ENCODE measurements at regions of chr2 and their contacts with region 1.

Region 1: DNA sequence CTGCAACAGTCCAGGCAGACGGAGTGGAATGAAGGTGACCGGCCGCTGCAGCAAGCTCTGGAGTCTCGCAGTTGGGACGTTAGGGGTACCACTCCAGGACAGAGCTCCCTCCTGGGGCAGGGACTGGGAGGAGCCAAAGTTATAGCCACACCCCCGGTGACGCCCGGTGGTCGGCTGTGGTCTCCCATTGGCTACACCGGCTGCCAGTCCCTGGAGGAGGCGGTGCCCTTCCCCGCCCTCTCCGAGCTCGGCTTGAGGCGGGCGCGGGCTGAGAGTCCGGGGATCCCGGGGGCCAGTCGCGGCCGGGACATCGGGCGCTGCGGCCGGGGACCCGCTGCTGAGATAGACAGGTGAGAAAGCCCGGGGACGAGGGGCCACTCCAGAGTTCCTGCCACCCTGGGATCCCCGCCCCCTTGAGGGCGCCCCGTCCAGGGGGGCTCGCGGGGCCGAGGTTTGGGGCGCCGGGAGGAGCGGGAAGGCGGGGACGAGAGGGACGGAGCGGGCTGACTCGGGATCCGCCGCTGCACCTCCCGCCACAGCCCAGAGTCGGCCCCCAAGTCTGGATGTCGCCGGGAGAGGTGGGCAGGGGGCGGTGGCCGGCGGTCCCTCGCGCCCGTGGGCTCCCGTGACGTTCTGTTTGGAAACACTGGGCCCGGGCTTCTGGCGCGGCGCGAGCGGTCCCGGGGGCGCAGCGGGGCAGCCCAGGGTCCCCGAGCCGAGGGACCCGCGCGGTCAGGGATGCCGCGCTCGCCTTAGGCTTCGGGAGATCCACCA is at the start of gene PLEKHH2:
- DNase-seq: peak; percentile 86
- H3K4me3 Mint-ChIP-seq: peak within 1 kb of the TSS; percentile 89
- H3K27ac Mint-ChIP-seq: peak within 1 kb of the TSS; percentile 70
- H3K4me1 Mint-ChIP-seq: peaks cover 19% of the 10 kb centered on the region
- H3K27me3 Mint-ChIP-seq: peaks cover 32% of the 10 kb centered on the region
- total RNA-seq, gene PLEKHH2: 21.3 and 25.1 TPM in 2 replicates

Region 2: GRCh38 chr2:43219383-43220228 is 417.6 kb before region 1 on chr2:
- intact Hi-C with region 1: no loop called
- DNase-seq: peak; percentile 82
- H3K4me3 Mint-ChIP-seq: peak overlapping the region; percentile 82
- H3K27ac Mint-ChIP-seq: peak overlapping the region; percentile 94
- H3K4me1 Mint-ChIP-seq: peaks cover 35% of the 10 kb centered on the region
- H3K27me3 Mint-ChIP-seq: no peaks in the 10 kb centered on the region

Region 3: DNA sequence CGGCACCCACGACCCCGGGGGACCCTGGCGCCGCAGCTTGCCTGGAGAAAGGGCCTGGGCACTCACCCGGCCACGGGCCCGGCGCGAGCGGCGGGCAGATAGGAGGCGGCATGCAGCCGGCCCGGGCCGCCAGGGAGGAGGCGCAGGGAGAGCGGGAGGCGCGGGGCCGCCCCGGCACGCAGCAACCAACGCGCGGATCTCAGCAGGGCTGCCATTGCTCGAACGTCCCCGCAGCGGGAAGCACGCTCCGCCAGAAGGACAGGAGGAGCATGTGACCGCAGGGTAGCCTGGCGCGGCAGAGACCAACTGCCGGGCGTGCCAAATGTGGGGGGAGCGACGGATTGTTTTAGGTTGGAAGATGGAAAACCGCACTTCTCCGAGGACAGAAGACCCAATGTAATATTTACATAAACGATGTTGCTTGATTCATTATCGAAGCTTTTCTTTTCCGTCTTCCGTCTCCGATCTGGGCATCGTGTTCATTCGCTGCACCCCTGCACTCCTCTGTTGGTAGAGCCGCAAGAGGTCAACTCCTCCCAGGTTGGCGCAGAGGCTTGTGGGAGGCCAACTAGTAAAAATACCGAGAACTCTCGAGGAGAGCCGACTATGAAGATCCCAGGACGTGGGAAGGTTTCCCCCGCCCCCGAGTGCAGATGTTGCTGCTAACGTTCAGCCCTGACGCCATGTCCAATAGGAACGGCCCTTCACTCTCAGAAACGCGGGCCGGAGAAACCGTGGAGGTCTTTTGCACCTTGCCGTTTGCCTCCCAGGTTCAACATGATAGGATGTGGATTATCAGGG is 358.7 kb after region 1 on chr2 and contains the start of gene LRPPRC:
- intact Hi-C with region 1: loop called (anchors 10 kb)
- DNase-seq: peak; percentile 87
- H3K4me3 Mint-ChIP-seq: peak within 1 kb of the TSS; percentile 93
- H3K27ac Mint-ChIP-seq: peak within 1 kb of the TSS; percentile 97
- H3K4me1 Mint-ChIP-seq: peaks cover 33% of the 10 kb centered on the region
- H3K27me3 Mint-ChIP-seq: peaks cover 2% of the 10 kb centered on the region
- total RNA-seq, gene LRPPRC: 156 and 161 TPM in 2 replicates